ENCODE measurements at regions of chr14 and their contacts with region 1.

Region 1: DNA sequence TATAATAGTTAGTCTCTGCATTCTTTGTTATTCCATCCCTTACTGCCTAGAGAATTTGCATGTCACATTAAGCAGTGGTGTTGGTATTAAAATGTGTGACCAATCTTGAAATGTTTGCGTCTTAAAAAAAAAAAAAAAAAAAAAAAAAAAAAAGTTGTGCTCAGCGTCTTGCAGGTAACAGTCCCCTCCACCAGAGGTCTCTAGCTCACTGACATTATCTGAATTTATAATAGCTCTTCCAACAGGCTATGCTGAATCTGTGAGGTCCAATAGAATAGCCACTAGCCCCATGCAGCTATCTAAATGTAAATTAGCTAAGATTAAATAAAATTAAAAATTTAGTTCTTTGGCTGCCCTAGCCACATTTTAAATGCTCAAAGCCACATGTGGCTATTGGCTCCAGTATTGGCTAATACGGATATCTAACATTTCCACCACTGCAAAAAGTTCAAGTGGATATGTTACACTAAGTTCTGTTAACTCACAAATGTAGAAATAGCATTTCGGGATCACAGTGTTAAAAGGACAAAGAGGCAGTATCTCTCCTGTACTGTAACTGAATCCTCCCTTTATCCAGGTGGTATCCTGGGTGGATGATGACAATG is 28.7 kb downstream of the NKX2-8 start:
- DNase-seq: peak; percentile 17
- H3K4me3 ChIP-seq: no peak overlapping the region
- H3K27ac ChIP-seq: no peak overlapping the region
- H3K4me1 ChIP-seq: no peaks in the 10 kb centered on the region
- H3K27me3 ChIP-seq: no peaks in the 10 kb centered on the region
- CTCF ChIP-seq: peak; percentile 78 to 79

Region 2: GRCh38 chr14:35883677-35884293 is 670.0 kb before region 1 on chr14:
- CTCF ChIA-PET with region 1: interaction called, 28 read pairs
- dilution Hi-C with region 1: no loop called
- in situ Hi-C with region 1: no loop called
- intact Hi-C with region 1: loop called (anchors 1 kb)
- DNase-seq: no peak
- H3K4me3 ChIP-seq: no peak overlapping the region
- H3K27ac ChIP-seq: no peak overlapping the region
- H3K4me1 ChIP-seq: peaks cover 8% of the 10 kb centered on the region
- H3K27me3 ChIP-seq: no peaks in the 10 kb centered on the region
- CTCF ChIP-seq: peak; percentile 72 to 75

Region 3: DNA sequence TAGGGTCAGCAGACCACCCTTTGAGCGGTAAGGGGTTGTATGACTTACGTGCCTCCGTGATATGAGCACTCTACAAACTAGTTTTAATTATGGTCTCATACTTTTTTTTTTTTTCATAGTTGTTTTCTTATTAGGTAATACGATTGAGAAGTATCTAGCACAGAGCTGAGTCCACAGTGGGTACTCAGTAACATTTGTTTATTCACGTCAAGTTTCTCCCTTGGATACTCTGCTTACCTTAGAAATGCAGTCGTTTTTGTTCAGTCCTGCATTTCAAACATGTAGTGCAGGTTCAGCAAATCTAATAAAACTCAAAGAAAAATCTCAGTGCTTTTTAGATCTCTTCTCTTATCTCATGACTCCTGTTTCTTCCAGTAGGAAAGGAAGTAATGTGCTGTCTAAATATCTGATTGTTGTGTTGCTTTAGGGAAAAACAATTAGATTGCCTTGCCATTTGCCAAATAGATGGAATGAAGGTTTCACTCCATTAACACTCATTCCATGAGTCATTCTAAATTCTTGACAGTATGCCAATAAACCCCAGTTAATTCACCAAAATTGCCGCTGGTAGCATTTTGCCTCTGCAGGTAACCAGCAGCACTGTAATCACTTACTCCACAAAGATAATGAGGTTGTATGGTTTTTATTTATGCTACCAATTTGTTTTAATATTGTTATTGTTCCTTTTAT is 496.2 kb before region 1 on chr14:
- CTCF ChIA-PET with region 1: no interaction called
- dilution Hi-C with region 1: no loop called
- in situ Hi-C with region 1: no loop called
- intact Hi-C with region 1: no loop called
- DNase-seq: peak; percentile 49
- H3K4me3 ChIP-seq: no peak overlapping the region
- H3K27ac ChIP-seq: no peak overlapping the region
- H3K4me1 ChIP-seq: peaks cover 12% of the 10 kb centered on the region
- H3K27me3 ChIP-seq: no peaks in the 10 kb centered on the region
- CTCF ChIP-seq: no peak

Region 4: DNA sequence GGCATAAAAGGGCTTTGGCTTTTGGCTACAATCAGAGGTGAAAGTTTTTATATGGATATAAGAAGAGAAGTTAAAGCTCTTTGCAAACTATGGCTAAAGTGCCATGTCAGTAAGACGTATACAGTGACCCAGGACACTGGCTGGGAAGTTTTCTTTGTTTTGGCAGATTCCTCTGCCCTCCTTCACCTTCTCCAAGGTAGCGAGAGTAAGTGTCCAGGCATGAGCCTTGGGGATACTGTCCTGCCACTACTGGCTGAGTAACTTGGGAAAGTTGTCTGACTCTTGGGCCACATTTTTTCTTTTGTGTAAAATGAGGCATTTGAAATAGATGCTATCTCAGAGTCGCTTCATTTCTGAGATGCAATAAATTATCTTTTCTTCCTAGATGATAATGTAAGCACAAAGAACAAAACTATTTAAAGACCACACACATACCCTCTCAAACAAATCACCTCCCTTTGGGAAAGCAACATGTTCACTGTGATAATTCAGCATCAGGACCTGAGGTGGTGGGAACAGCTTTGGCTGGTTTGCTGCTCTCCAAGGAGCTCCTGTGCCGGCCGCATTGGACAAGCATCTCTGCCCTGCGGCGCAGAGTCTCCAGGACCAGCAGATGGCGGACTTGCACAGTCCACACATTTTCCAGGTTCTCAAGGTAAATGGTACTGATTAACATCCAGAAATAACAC is 483.6 kb before region 1 on chr14:
- CTCF ChIA-PET with region 1: interaction called, 8 read pairs
- dilution Hi-C with region 1: no loop called
- in situ Hi-C with region 1: no loop called
- intact Hi-C with region 1: loop called (anchors 1 kb)
- DNase-seq: peak; percentile 61
- H3K4me3 ChIP-seq: no peak overlapping the region
- H3K27ac ChIP-seq: peak overlapping the region; percentile 38
- H3K4me1 ChIP-seq: peaks cover 31% of the 10 kb centered on the region
- H3K27me3 ChIP-seq: no peaks in the 10 kb centered on the region
- CTCF ChIP-seq: peak; percentile 91 to 93

Region 5: DNA sequence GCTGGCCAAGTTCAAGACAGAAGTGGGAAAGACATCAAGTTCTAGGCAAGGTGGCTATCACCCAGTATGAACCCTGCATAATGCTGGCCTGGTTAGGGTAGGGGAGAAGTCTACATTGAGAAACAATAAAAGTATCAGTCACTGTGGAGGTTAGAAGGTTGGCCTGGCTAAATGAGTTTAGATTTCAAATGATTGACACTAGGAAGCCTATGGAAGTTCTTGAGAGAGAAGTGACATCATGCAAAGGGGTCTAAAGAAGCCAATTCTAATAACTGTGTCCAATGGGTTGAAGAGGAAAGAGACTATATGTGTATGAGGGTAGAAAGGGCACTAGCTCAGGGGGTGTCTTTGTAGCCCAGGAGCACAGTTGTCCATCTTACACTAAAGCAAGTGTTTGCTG is 134.8 kb before region 1 on chr14:
- CTCF ChIA-PET with region 1: no interaction called
- dilution Hi-C with region 1: no loop called
- in situ Hi-C with region 1: no loop called
- intact Hi-C with region 1: no loop called
- DNase-seq: no peak
- H3K4me3 ChIP-seq: no peak overlapping the region
- H3K27ac ChIP-seq: no peak overlapping the region
- H3K4me1 ChIP-seq: no peaks in the 10 kb centered on the region
- H3K27me3 ChIP-seq: no peaks in the 10 kb centered on the region
- CTCF ChIP-seq: no peak

Region 6: GRCh38 chr14:36440928-36441682 is 112.7 kb before region 1 on chr14:
- CTCF ChIA-PET with region 1: interaction called, 19 read pairs
- dilution Hi-C with region 1: no loop called
- in situ Hi-C with region 1: no loop called
- intact Hi-C with region 1: no loop called
- DNase-seq: no peak
- H3K4me3 ChIP-seq: no peak overlapping the region
- H3K27ac ChIP-seq: no peak overlapping the region
- H3K4me1 ChIP-seq: no peaks in the 10 kb centered on the region
- H3K27me3 ChIP-seq: peaks cover 10% of the 10 kb centered on the region
- CTCF ChIP-seq: no peak

Region 7: DNA sequence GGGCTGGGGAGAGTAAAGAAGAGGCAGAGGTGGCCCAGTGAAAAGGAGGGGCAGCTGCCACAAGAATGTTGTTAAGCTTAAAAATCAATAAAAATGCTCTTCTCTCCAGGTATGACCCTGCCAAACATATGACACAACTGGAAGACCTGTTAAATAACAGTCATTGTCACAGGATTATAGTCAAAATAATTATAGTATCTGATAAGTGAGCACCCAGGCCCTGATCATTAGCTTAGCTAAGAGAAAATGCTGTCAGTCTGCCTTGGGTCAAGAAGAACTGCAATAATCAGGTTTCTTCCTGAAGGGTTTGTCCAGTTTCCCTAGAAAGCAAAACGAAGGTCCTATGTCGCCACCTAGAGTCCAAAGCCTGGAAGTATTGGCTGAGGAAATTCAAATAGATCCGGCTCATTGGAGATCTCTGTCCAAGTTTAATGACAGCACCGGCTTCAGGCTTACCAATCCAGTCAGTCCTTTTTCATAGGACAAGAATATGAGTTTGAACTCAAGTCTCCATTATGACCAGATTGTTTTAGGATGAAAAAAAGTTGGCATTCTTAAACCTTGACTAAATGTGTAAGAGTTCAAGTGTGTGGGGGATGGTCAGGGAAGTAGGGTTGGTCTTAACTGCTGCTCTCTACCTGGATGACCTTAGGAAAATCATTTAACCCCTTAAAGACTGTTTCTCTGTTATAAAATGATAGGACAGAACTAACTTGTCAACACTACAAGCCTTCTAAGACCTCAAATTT is 51.2 kb after region 1 on chr14:
- CTCF ChIA-PET with region 1: interaction called, 11 read pairs
- dilution Hi-C with region 1: no loop called
- in situ Hi-C with region 1: loop called in 1 of 2 experiments (anchors 10 kb)
- intact Hi-C with region 1: loop called (anchors 1 kb)
- DNase-seq: peak; percentile 66
- H3K4me3 ChIP-seq: no peak overlapping the region
- H3K27ac ChIP-seq: no peak overlapping the region
- H3K4me1 ChIP-seq: no peaks in the 10 kb centered on the region
- H3K27me3 ChIP-seq: no peaks in the 10 kb centered on the region
- CTCF ChIP-seq: peak; percentile 82 to 87

Region 8: DNA sequence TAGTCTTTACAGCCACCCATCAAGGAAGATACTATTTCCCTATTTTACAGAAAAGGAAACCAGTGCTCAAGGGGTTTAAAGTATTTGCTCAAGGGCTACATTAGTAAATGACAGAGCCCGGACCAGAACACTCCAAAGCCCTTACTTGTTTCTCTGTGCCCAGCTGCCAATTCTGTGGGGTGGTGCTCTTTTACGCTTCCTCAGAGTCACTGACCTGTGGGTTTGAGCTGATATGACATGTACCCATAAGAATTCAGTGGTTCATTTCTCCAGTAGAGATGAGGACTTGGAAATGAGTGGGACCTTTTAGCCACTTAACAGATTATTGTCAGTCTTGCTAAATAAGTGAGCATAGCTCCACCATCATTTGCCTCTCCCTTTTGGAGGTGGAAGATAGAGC is 66.1 kb after region 1 on chr14:
- CTCF ChIA-PET with region 1: no interaction called
- dilution Hi-C with region 1: no loop called
- in situ Hi-C with region 1: no loop called
- intact Hi-C with region 1: no loop called
- DNase-seq: peak; percentile 72
- H3K4me3 ChIP-seq: no peak overlapping the region
- H3K27ac ChIP-seq: no peak overlapping the region
- H3K4me1 ChIP-seq: no peaks in the 10 kb centered on the region
- H3K27me3 ChIP-seq: peaks cover 3% of the 10 kb centered on the region
- CTCF ChIP-seq: no peak

Region 9: GRCh38 chr14:36634248-36634647 is 80.5 kb after region 1 on chr14:
- CTCF ChIA-PET with region 1: no interaction called
- dilution Hi-C with region 1: no loop called
- in situ Hi-C with region 1: no loop called
- intact Hi-C with region 1: no loop called
- DNase-seq: no peak
- H3K4me3 ChIP-seq: no peak overlapping the region
- H3K27ac ChIP-seq: no peak overlapping the region
- H3K4me1 ChIP-seq: no peaks in the 10 kb centered on the region
- H3K27me3 ChIP-seq: no peaks in the 10 kb centered on the region
- CTCF ChIP-seq: no peak

Region 10: DNA sequence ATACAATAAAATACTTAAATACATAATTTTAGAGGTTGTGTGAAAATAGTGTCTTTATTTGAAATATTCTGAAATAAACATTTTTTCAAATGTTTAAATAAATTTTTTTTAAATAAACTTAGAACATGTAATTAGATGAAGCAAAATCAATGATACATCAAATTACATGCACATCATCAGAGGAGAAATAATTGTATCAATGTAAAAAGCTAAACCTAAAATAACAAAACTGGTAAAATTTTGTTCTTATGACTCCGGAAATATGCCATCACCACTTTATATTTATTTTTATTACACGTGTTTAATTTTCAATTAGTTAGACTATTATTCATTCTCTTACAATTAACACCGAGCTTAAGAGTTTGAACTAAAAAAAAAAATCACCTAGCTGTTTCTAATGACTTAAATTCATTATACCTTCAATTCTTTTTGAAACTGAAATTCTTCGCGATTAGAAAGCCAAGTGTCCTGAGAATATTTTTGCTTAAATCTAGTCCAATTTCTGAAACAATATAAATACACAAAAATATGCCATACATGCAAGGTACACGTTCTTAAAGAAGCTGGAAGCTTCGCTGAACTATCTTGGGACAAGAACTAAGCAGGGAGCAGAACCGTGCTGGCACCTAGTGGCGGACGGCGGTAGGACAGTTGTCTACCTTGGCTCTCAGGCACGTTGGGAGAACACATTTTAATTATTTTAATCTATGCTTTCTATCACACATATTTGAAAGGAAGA is 388.2 kb after region 1 on chr14:
- CTCF ChIA-PET with region 1: interaction called, 4 read pairs
- dilution Hi-C with region 1: no loop called
- in situ Hi-C with region 1: no loop called
- intact Hi-C with region 1: loop called (anchors 5 kb)
- DNase-seq: peak; percentile 55
- H3K4me3 ChIP-seq: no peak overlapping the region
- H3K27ac ChIP-seq: no peak overlapping the region
- H3K4me1 ChIP-seq: peaks cover 13% of the 10 kb centered on the region
- H3K27me3 ChIP-seq: no peaks in the 10 kb centered on the region
- CTCF ChIP-seq: peak; percentile 98 to 99

Region 11: DNA sequence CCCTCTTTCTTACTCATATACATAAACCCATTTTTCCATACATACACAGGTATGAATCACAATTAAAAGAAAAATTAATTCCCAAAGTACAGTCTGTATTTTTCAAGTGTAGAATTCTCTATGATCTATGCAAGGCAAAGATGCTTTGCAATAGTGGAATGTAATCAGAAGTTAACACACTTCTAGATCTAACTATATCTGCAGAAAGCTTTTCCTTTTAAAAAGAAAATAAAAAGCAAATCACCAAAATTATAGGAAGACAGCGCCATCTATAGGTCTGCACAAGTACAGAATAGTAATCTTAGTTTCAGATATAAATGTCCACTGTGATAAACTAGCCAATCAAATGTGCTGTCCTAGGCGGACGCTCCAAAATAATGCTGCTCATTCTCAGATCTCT is 596.7 kb after region 1 on chr14:
- CTCF ChIA-PET with region 1: no interaction called
- dilution Hi-C with region 1: no loop called
- in situ Hi-C with region 1: no loop called
- intact Hi-C with region 1: loop called (anchors 2 kb)
- DNase-seq: peak; percentile 36
- H3K4me3 ChIP-seq: no peak overlapping the region
- H3K27ac ChIP-seq: no peak overlapping the region
- H3K4me1 ChIP-seq: peaks cover 2% of the 10 kb centered on the region
- H3K27me3 ChIP-seq: no peaks in the 10 kb centered on the region
- CTCF ChIP-seq: peak; percentile 65 to 68

Measured in mammary epithelial cell (primary cell).